ENCODE measurements at regions of chr16 and their contacts with region 1.

Region 1: DNA sequence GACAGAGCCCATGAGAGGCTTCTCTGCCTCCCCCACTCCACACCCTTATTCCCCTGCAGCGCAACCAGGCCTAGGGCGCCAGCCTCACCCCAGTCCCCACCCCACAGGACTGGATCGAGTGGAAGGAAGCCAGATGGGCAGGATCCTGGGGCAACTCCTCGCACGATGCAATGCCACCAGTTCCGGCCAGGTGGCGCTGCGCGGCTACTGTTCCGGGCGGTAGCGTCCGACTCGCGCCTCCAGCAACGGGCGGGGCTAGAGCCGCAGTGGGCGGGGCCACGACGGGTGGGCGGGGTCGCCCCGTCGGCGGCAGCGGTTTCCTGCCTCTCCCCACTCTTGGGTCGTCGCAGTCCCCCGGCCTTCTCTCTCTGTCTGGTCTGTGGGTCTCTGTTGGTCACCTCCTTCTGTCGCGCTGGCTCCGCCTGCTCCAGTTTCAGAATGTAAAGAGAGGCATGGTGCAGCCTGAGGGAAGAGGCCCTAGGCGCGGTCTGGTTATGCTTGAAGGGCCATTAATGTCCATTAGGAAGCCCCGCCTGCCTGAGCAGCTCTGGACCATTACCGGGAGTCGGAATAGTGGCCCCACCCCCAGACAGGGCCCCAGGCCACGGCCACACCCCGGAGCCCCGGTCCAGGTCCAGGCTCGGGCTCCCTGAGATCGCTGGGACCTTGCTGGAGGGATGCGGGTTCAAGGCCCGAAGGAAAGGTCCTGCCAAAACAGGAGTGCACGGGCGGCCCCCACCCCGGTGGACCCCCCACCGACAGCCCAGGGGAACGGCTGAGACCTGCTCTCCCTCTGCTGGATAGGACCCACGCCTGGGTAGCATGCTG is 3.4 kb upstream of the NHERF2 start:
- DNase-seq: peak; percentile 88 to 98 (median 93)
- ATAC-seq: peak; percentile 99
- H3K4me3 ChIP-seq: peak overlapping the region; percentile 34
- H3K4me3 Mint-ChIP-seq: peak overlapping the region; percentile 56 to 83 (median 76)
- H3K27ac ChIP-seq: peak overlapping the region; percentile 67
- H3K27ac Mint-ChIP-seq: peak overlapping the region; percentile 66 to 95 (median 79)
- H3K4me1 ChIP-seq: peaks cover 14 to 20% of the 10 kb centered on the region in 2 donors
- H3K4me1 Mint-ChIP-seq: peaks cover 13 to 30% (median 22%) of the 10 kb centered on the region in 7 donors
- H3K27me3 ChIP-seq: peaks cover 0 to 8% of the 10 kb centered on the region in 2 donors
- H3K27me3 Mint-ChIP-seq: peaks cover 7 to 58% (median 15%) of the 10 kb centered on the region in 5 donors

Region 2: DNA sequence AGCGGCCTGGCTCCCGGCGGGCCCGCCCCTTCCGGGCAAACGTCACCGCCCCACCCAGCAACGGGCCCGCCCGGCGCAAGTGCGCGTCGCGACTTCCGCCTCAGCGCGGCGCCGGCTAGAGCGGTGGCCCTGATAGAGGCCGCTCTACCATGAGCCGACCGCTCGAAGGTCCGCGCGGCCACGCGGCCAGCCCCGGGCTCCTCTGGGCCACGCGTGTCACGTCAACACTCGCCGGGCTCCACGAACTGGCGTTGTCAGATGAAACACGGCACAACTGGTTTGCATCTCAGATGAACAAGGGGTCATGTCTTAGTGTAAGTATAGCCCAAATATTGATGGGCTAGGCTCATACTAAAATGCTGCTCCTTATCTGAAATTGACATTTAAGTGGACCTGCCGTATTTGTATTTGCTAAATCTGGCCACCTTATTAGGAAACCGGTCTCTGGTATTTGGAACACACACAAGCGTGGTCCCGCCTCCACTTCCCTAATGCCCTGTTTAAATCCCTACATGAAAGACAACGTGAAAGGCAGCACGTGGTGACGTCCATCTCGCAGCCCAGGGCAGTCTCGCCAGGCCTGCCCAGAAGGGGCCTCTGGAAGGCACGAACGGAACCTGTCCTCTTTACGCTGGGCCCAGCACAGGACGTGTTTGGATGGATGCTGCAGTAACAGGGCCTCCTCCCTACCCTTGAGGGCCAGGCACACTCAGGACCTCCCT is 13.4 kb before region 1 on chr16 and contains the start of gene ZNF598:
- CTCF ChIA-PET with region 1: interaction called, 3 read pairs
- POLR2A ChIA-PET with region 1: interaction called, 4 read pairs
- intact Hi-C with region 1: loop called in 1 of 2 experiments (anchors 1 kb)
- DNase-seq: peak; percentile 64 to 87 (median 78)
- ATAC-seq: peak; percentile 97
- H3K4me3 ChIP-seq: peak within 1 kb of the TSS; percentile 77
- H3K4me3 Mint-ChIP-seq: peak within 1 kb of the TSS; percentile 87 to 94 (median 92)
- H3K27ac ChIP-seq: peak within 1 kb of the TSS; percentile 91
- H3K27ac Mint-ChIP-seq: peak within 1 kb of the TSS; percentile 85 to 99 (median 97)
- H3K4me1 ChIP-seq: peaks cover 26 to 29% of the 10 kb centered on the region in 2 donors
- H3K4me1 Mint-ChIP-seq: peaks cover 22 to 39% (median 32%) of the 10 kb centered on the region in 7 donors
- H3K27me3 ChIP-seq: no peaks in the 10 kb centered on the region
- H3K27me3 Mint-ChIP-seq: no peaks in the 10 kb centered on the region
- total RNA-seq, gene ZNF598: 44.3 to 63.2 (median 49.8) TPM

Region 3: DNA sequence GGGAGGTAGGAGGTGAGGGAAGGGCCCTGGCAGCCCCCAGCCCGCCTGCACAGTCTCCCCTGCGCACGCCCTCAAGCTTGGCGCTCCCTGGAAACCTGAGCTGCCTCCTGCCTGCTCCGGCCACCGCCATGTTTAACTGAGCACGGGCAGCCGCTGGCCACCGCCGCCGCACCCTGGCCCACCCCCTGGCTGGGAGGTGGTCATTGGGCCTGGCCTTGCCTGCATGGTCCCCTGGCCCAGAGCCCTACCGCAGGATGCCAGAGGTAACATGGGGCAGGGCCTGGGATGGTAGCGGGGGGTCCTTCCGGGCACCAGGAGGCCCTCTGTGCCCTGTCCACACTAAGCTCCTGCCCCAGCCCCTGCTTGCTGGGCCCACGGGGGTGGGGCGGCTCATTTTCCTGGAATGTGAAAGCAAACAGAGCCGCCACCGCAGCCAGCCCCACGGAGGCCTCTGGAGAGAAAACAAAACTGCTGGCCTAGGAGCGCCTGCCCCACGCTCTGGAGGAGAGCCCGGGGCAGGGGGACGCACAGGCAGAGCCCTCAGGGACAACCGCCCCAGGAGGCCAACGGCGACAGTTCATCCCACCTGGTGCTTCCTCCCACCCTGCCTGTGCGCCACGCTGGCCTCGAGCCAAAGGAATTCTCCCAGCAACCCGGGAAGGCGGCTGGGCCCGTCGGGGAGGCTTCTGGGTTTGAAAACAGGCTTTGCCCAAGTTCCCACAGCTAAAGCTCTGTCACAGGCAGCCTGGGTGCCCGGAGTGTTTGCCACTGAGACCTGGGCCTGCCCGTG is 12.3 kb after region 1 on chr16:
- CTCF ChIA-PET with region 1: no interaction called
- POLR2A ChIA-PET with region 1: no interaction called
- intact Hi-C with region 1: no loop called
- DNase-seq: no peak
- ATAC-seq: no peak
- H3K4me3 ChIP-seq: no peak overlapping the region
- H3K4me3 Mint-ChIP-seq: no peak overlapping the region
- H3K27ac ChIP-seq: no peak overlapping the region
- H3K27ac Mint-ChIP-seq: no peak overlapping the region
- H3K4me1 ChIP-seq: no peaks in the 10 kb centered on the region
- H3K4me1 Mint-ChIP-seq: peaks cover 0 to 4% (median 0%) of the 10 kb centered on the region in 7 donors
- H3K27me3 ChIP-seq: no peaks in the 10 kb centered on the region
- H3K27me3 Mint-ChIP-seq: no peaks in the 10 kb centered on the region

Region 4: DNA sequence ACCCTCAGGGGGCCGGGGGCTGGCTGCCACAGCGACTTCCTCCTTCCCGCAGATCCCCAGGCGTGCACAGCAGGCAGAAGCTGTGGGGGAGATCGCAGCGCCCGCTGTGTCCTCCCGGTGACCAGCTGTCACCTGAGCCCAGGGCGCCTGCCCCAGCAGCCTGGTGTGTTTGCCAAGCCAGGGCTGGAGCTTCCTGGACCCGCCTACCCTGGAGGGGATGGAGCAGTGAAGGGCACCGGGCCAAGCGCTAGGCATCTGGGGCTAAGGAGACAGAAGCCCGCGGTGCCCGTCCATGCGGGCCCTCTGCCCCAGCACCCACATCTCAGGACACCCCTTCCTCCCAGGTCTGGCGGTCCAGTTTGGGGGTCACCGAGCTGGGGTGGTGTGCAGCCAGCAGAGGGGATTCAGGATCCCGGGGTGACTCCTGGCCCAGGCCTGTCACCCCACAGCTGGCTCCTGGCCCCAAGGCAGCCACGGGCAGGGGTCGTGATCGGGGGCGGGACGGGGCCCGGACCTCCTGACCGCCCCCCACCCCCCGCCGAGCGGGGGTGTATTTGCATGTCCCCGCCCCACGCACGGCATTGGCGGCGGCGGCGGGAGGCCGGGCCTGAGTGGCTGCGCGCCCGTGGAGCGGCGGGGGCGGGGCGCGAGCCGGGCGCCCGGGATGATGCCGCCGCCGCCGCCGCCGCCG is 124.8 kb after region 1 on chr16 and contains the start of gene RAB26:
- CTCF ChIA-PET with region 1: interaction called, 42 read pairs
- POLR2A ChIA-PET with region 1: interaction called, 10 read pairs
- intact Hi-C with region 1: loop called in 1 of 2 experiments (anchors 1 kb)
- DNase-seq: peak; percentile 42 to 76 (median 56)
- ATAC-seq: peak; percentile 92
- H3K4me3 ChIP-seq: no peak within 1 kb of the TSS
- H3K4me3 Mint-ChIP-seq: peak within 1 kb of the TSS in 8 of 10 donors; percentile 29 to 67 (median 52)
- H3K27ac ChIP-seq: peak within 1 kb of the TSS; percentile 20
- H3K27ac Mint-ChIP-seq: peak within 1 kb of the TSS in 1 of 9 donors; percentile 48
- H3K4me1 ChIP-seq: peaks cover 13 to 31% of the 10 kb centered on the region in 2 donors
- H3K4me1 Mint-ChIP-seq: peaks cover 0 to 16% (median 11%) of the 10 kb centered on the region in 7 donors
- H3K27me3 ChIP-seq: no peaks in the 10 kb centered on the region
- H3K27me3 Mint-ChIP-seq: peaks cover 0 to 3% (median 0%) of the 10 kb centered on the region in 5 donors
- total RNA-seq, gene RAB26: 0.86 TPM in 1 of 5 experiments, not detected in the others

Region 5: DNA sequence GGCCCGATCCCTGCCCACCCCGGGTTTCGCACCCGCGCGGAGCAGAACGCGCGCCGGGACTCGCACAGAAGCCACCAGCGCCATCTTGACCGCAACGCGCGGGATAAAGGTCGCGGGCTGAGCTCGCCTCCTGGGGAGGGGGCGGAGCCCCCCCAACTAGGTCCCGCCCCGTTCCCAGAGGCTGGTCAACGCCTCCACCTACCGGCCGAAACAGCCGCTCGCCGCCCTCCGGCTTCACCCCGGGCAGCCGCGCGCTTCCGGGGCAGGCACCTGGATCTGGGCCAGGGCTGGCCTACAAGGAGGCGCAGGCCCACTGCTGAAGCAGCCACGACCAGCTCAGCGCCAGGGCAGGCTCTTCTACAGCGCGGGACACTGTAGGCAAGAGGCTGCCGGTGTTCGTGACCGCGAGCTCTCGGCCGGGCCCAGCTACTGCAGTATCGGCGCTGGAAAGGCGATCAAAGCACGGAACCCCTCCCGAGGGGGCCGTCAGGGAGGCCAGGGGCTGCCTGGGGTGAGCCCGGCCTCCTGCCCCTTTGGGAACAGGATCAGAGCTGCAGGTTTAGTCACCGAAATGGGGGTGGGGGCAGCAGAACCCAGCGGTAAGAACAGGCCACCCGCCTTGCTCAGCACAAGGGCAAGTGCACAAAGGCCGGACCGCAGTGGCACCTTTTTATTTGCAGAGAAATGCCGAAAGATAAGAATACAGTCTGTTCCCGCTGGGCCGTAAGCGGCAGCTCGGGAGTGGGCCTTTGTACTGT is 228.3 kb after region 1 on chr16 and contains the start of gene ECI1:
- CTCF ChIA-PET with region 1: no interaction called
- POLR2A ChIA-PET with region 1: no interaction called
- intact Hi-C with region 1: loop called in 1 of 2 experiments (anchors 1 kb)
- DNase-seq: peak; percentile 48 to 90 (median 62)
- ATAC-seq: peak; percentile 91
- H3K4me3 ChIP-seq: peak within 1 kb of the TSS; percentile 62
- H3K4me3 Mint-ChIP-seq: peak within 1 kb of the TSS; percentile 85 to 94 (median 89)
- H3K27ac ChIP-seq: peak within 1 kb of the TSS; percentile 76
- H3K27ac Mint-ChIP-seq: peak within 1 kb of the TSS; percentile 85 to 94 (median 91)
- H3K4me1 ChIP-seq: peaks cover 7% of the 10 kb centered on the region in 2 donors
- H3K4me1 Mint-ChIP-seq: peaks cover 0 to 12% (median 7%) of the 10 kb centered on the region in 7 donors
- H3K27me3 ChIP-seq: no peaks in the 10 kb centered on the region
- H3K27me3 Mint-ChIP-seq: no peaks in the 10 kb centered on the region
- total RNA-seq, gene ECI1: 19.9 to 29.3 (median 26.8) TPM

Measured in naive thymus-derived CD4-positive, alpha-beta T cell (primary cell).